ENCODE measurements at regions of chr1 and their contacts with region 1.

Region 1: DNA sequence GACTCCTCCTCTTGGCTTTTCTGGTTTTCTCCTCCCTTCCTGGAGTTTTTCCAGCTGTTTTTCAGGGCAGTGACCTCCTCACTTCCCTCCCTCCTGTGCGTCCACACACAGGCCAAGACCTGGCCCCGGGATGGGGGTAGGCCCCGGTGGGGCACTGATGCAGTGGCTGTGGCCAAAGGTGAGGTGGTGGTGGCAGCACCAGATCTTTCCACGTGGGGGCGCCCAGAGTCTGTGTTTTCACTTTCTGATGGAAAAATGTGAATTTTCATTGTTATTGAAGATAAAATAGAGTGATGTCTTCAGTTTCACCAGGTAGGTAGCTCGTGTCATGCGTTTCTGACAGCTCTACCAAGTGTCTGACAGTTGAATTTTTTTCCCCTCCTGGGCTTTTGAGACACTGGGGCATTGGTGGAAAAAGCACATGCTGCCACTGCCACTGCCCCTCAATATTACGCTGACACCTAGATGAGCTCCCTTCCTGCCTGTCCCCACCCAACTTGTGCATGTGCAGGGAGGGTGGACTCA is 39.9 kb upstream of the MAGOH start:
- DNase-seq: peak; percentile 88
- H3K4me3 ChIP-seq: no peak overlapping the region
- H3K27ac ChIP-seq: no peak overlapping the region
- H3K4me1 ChIP-seq: peaks cover 0 to 5% (median 0%) of the 10 kb centered on the region in 6 donors
- H3K27me3 ChIP-seq: no peaks in the 10 kb centered on the region
- CTCF ChIP-seq: peak; percentile 85 to 96 (median 93)
- POLR2A ChIP-seq: no peak

Region 2: DNA sequence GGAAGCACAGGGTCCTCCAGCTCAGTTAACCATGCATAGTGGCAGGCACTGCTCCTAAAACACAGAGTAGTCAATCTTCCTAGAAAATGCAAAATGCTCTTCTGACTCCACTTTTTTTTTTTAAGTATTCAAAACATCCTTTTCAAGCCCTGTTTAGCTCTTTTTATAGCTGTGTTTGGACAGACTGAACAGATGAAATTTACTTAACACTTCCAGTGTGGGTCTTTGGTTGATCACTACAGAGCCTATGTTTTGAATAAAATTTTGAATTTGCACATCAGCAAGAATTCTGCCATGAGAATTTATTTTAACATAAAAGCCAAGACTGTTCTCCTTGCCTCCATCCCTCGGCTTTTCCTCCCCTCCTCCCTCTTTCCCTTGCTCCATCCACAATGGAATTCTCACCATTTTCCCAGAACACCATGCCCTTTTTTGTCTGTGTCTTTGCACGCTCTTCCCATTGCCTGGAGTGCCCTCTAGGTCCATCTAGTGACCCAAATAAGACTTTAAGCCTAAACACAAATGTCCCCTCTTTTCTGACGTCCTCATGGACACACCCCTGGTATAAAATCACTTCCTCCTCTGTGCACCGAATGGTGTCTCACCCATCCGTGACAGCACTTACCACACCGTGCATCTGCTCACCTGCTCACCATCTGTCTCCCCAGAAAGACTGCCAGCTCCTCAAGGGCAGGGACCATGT is 105.7 kb before region 1 on chr1:
- intact Hi-C with region 1: no loop called
- DNase-seq: no peak
- H3K4me3 ChIP-seq: no peak overlapping the region
- H3K27ac ChIP-seq: no peak overlapping the region
- H3K4me1 ChIP-seq: peaks cover 0 to 24% (median 4%) of the 10 kb centered on the region in 6 donors
- H3K27me3 ChIP-seq: peaks cover 0 to 61% (median 9%) of the 10 kb centered on the region in 7 donors
- CTCF ChIP-seq: no peak
- POLR2A ChIP-seq: no peak

Region 3: DNA sequence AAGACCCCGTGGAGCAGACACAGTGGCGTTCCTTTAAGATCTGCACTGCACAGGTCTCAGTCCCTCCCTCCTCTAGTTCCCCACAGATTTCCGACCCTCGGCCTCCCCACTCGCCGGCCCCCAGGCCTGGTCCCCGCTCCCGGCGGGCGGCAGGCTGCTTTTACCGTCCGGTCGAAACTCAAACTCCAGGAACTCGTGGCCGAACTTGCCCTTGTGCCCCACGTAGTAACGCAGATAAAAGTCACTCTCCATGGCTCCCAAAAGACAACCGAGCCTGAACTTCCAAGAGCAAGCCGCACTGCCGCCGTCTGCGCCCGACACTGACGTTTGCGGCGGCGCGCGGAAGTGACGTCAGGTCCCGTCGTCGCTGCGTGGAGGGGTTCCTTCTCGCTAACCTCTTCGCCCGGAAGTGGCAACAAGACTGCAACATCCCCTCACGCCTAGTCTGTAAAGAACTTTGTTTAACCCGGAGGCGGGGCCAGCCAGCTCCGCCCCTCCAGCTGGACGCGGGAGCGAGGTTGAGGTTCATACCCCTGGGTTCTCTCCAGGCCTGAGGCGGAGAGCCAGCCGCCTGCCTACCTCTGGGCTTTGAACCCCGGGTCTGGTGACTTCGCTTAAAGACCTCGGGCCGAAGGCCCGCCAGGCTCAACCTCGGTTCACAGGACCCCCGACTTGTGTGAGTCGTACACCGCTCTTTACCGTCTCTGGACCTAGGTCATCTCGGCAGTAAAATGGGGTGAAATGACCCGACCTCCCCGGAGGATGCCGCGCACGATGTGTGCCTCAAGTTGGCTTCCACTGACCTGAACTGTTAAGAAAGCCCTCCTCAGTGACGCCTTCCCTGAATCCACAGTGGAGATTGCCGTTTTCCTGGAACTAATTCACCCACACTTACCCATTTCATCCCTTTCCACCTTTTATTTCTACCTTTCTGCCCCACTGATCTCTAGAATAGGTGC is 39.8 kb before region 1 on chr1 and contains the start of gene MAGOH:
- intact Hi-C with region 1: no loop called
- DNase-seq: peak; percentile 99
- H3K4me3 ChIP-seq: peak within 1 kb of the TSS; percentile 71 to 100 (median 97)
- H3K27ac ChIP-seq: peak within 1 kb of the TSS; percentile 39 to 91 (median 85)
- H3K4me1 ChIP-seq: peaks cover 19 to 34% (median 32%) of the 10 kb centered on the region in 6 donors
- H3K27me3 ChIP-seq: no peaks in the 10 kb centered on the region
- CTCF ChIP-seq: peak in 1 of 11 experiments; percentile 35
- POLR2A ChIP-seq: peak; percentile 42 to 72 (median 46)
- total RNA-seq, gene MAGOH: 26.5 to 39.7 (median 34.1) TPM

Region 4: DNA sequence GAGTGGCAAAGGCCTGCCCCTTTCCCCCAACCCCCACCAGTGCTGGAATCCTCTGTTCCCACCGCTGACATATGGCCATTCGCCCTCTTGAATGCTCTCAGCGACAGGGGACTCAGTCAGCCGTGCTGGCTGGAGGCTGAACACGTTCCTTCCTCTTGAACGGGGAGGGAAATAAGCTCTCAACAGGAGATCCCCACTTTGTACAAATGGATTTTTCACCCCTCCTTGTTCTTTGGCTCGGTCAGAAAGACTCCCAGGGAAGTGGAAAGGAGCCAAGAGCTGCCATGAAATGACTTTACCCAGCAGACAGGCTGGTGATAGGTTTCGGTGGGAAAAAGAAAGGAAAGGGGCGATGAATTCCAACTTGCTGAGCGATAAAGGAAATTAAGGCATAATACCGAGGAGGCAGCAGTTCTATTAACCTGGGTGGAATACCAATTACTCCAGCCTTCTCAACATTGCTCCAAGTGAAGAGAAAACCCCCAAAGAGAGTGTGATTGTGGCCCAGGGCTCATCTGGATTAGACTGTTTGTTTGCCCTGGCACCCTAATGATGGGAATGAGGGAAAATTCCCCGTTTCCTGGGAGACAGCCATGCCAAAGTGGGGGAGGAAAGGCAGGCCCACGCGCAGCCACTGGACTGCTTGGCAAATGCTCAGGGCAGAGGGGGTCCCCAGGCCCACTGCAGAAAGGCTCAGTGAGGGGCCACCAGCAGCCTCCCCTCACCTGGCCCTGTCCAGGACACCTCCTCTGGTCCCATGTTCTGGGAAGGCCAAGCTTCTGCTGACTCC is 25.7 kb after region 1 on chr1:
- intact Hi-C with region 1: no loop called
- DNase-seq: no peak
- H3K4me3 ChIP-seq: no peak overlapping the region
- H3K27ac ChIP-seq: no peak overlapping the region
- H3K4me1 ChIP-seq: peaks cover 0 to 16% (median 2%) of the 10 kb centered on the region in 6 donors
- H3K27me3 ChIP-seq: no peaks in the 10 kb centered on the region
- CTCF ChIP-seq: no peak
- POLR2A ChIP-seq: no peak

Region 5: GRCh38 chr1:53393325-53393792 is 115.1 kb after region 1 on chr1:
- intact Hi-C with region 1: loop called (anchors 2 kb)
- DNase-seq: peak; percentile 89
- H3K4me3 ChIP-seq: no peak overlapping the region
- H3K27ac ChIP-seq: no peak overlapping the region
- H3K4me1 ChIP-seq: peaks cover 5 to 23% (median 14%) of the 10 kb centered on the region in 6 donors
- H3K27me3 ChIP-seq: no peaks in the 10 kb centered on the region
- CTCF ChIP-seq: peak; percentile 61 to 97 (median 93)
- POLR2A ChIP-seq: no peak

Measured in spleen (tissue), 13 donors.